Psoas muscle (tissue), 8 donors: ENCODE measurements at regions of chr18 and their contacts with region 1.

Region 1: DNA sequence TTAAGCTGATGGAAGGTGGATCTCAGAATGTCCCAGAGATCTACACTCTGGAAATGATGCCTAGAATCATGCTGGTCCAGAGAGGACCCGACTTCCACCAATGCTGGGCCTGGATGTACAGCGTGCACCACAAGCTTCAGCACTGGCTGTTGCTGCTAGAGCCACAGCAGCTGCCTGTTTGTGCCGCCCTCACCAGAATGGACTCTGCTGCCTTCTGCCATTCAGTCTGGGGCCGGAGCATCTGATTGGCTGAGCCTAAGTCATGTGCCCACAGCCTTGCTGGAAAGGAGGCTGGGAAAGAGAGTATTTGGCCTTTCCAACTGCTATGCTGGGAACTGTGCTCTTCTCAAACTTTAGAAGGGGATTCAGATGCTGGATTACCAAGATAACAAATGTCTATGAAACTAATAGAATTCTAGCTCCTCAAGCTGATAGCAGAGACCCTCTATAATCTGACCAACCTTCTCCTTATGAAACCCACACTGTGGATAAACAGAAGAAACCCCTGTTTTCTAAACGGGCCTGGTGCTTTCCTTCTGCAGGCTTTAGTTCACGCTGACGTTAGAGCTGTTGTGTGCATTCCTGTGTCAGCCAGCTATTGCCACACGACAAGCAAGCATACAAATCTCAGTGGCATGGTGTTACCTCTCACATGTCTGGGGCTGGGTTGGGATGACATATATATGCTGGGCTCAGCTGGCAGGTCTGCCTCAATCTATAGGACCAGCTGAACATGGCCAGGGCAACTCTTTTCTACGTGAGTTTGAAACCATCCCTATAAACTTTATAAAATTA is 4.1 kb upstream of the LOXHD1 start:
- DNase-seq: no peak
- ATAC-seq: peak; percentile 59 to 84 (median 80)
- H3K4me3 ChIP-seq: no peak overlapping the region
- H3K27ac ChIP-seq: no peak overlapping the region
- H3K4me1 ChIP-seq: no peaks in the 10 kb centered on the region
- H3K27me3 ChIP-seq: no peaks in the 10 kb centered on the region
- CTCF ChIP-seq: no peak

Region 2: DNA sequence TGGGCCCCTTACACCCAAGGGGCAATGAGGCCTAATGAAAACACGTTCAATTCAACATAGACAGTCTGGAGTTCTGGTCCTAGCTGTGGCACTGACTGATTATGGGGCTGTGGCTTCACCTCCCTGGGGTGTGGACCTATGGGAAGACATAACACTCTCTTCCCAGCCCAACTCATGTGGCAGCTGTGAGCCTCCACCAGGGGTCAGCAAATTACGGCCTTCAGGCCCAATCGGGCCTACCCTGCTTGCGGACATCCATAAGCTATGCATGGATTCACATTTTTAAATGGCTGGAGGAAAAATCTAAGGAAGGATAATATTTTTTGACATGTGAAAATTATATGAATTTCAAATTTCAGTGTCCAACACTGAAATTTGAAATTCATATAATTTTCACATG is 105.4 kb before region 1 on chr18:
- intact Hi-C with region 1: loop called (anchors 5 kb)
- DNase-seq: peak in 1 of 2 donors; percentile 56
- ATAC-seq: peak; percentile 48 to 83 (median 74)
- H3K4me3 ChIP-seq: no peak overlapping the region
- H3K27ac ChIP-seq: no peak overlapping the region
- H3K4me1 ChIP-seq: no peaks in the 10 kb centered on the region
- H3K27me3 ChIP-seq: no peaks in the 10 kb centered on the region
- CTCF ChIP-seq: peak; percentile 49